Heart right ventricle (tissue), 16 donors: ENCODE measurements at regions of chr4 and their contacts with region 1.

Region 1: DNA sequence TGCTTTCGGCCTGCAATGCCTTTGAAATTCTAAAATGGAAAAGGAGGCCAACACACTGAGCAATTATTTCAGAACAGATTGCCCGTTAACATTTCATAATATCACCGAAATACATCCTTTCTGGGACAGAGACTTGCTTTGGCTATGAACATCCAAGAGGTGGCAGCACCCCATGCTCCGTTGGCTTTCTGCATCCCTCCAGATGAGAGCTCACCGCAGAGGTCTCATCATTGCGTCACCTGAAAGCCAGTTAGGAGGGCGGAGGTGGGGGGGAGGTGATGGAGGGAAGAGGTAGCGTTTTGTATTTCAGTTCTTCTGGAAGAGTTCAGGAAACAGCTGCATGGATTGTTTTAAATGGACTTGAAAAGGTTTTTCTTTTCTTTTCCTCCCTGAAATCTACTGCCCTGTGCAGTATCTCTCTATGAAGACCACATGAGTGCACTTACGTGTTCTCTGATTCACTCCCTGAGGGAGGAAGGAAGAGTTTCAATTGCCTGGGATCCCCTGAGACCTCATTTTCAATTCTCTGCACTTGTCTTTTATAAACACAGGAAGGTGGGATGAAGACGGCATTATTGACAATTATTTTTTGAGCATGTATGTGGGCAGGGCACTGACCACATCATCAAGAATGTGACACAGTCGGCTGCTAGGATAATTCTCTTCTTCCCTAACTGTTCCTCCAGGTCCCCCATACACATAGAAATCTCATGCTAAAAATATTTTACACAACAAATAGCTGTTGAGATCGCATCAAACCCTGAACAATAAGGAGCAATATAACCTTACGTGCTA is 166.9 kb upstream of the PGRMC2 start:
- DNase-seq: peak; percentile 66 to 80
- ATAC-seq: peak; percentile 85 to 94 (median 90)
- H3K4me3 ChIP-seq: no peak overlapping the region
- H3K27ac ChIP-seq: peak overlapping the region in 2 of 10 donors; percentile 17 to 22
- H3K4me1 ChIP-seq: peaks cover 0 to 30% (median 14%) of the 10 kb centered on the region in 9 donors
- H3K27me3 ChIP-seq: no peaks in the 10 kb centered on the region
- CTCF ChIP-seq: peak; percentile 47 to 89 (median 76)

Region 2: DNA sequence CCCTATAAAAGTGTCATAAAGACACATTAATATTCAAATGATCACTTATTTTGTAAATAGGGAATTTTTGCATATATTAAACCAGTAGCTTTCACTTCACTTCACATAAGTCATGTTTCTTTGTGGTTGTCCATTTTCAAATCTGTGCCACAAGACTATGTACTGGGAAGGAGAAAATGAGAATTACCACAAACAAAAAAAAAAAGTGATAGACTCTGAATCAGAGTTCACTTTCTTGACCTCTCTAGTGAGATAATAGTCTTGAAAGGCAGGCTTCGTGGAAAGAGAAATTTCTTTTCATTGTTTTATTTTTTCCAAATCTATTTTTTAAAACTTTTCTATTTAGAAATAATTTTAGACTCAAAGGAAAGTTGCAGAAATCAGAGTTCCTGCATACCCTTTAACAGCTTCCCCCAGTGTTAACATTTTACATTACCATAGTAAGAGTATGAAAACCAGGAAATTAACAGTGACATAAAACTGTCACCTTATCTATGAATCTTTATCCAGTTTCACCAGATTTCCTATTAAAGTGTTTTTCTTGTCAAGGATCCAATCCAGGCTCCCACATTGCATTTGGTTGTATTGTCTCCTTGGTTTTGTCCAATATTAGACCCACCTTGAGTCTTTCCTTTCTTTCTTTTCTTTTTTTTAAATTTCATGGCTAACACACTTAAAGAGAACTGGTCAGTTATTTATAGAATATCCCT is 48.5 kb after region 1 on chr4:
- intact Hi-C with region 1: no loop called
- DNase-seq: no peak
- ATAC-seq: peak in 4 of 8 donors; percentile 51 to 82 (median 71)
- H3K4me3 ChIP-seq: no peak overlapping the region
- H3K27ac ChIP-seq: no peak overlapping the region
- H3K4me1 ChIP-seq: peaks cover 0 to 3% (median 0%) of the 10 kb centered on the region in 9 donors
- H3K27me3 ChIP-seq: no peaks in the 10 kb centered on the region
- CTCF ChIP-seq: no peak

Region 3: DNA sequence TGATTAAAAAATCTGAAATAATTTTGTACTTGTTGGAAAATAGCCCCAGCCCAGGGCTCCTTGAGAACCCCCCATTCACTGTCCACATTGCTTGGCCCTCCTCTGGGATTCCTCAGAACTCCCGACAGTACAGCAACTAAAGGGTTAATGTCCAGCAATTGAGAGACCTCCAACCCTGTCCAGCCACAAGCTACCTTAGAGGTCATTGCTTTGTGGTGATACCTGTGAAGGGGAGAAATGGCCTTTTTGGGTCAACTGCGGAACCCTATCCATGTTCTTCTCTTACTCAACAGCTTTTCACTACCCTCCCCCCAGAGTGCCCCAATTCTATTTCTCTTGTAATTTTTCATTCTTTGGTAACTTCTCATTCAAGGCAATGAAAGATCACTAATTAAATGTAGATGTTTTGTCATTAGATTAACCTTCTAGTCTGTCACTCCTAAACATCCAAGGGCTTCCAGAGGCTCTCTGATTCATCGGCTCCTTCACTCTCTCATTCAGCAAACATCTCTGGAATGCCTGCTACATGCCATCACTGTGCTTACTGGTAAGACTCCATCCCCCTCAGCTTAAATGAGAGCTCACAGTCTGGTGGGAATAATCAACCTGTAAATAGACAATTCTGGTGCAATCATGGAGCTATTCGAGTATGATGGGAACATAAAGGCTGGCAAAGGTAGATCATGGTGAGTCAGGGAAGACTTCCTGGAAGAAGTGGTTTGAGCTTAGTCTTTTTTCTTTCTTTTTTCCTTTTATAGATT is 74.5 kb after region 1 on chr4:
- intact Hi-C with region 1: loop called in 2 of 10 experiments (anchors 5 kb)
- DNase-seq: peak in 1 of 2 donors; percentile 39
- ATAC-seq: peak; percentile 80 to 99 (median 90)
- H3K4me3 ChIP-seq: no peak overlapping the region
- H3K27ac ChIP-seq: peak overlapping the region in 9 of 10 donors; percentile 4 to 89 (median 62)
- H3K4me1 ChIP-seq: peaks cover 4 to 48% (median 26%) of the 10 kb centered on the region in 9 donors
- H3K27me3 ChIP-seq: no peaks in the 10 kb centered on the region
- CTCF ChIP-seq: no peak

Region 4: GRCh38 chr4:128558896-128559679 is 104.6 kb after region 1 on chr4:
- intact Hi-C with region 1: loop called in 4 of 10 experiments (anchors 5 kb)
- DNase-seq: no peak
- ATAC-seq: peak in 7 of 8 donors; percentile 20 to 72 (median 54)
- H3K4me3 ChIP-seq: no peak overlapping the region
- H3K27ac ChIP-seq: peak overlapping the region in 6 of 10 donors; percentile 5 to 80 (median 36)
- H3K4me1 ChIP-seq: peaks cover 0 to 23% (median 7%) of the 10 kb centered on the region in 9 donors
- H3K27me3 ChIP-seq: no peaks in the 10 kb centered on the region
- CTCF ChIP-seq: no peak

Region 5: DNA sequence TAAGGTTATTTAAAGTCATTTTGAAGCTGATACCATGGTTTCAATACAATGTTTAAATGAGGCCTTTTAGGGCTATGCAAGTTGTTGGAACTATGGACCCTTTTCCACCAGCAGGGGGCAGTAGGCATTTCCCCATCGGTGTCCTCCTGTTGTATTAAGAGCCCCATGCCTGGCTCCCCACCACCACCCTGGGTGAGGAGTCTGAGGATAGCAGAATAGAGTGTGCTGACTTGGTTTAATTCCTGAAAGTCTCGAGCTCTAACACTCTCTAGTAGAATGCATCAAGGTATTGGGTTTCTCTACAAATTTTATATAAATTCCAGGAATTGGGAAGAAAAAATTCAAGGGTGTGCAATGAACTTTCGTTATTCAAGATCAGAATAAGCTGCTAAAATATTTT is 120.2 kb after region 1 on chr4:
- intact Hi-C with region 1: loop called in 3 of 10 experiments (anchors 5 kb)
- DNase-seq: peak; percentile 22 to 60
- ATAC-seq: peak in 7 of 8 donors; percentile 30 to 66 (median 47)
- H3K4me3 ChIP-seq: no peak overlapping the region
- H3K27ac ChIP-seq: no peak overlapping the region
- H3K4me1 ChIP-seq: peaks cover 0 to 43% (median 28%) of the 10 kb centered on the region in 9 donors
- H3K27me3 ChIP-seq: no peaks in the 10 kb centered on the region
- CTCF ChIP-seq: peak; percentile 24 to 66 (median 52)

Region 6: GRCh38 chr4:128663336-128663735 is 208.9 kb after region 1 on chr4:
- intact Hi-C with region 1: loop called in 1 of 10 experiments (anchors 10 kb)
- DNase-seq: no peak
- ATAC-seq: no peak
- H3K4me3 ChIP-seq: no peak overlapping the region
- H3K27ac ChIP-seq: no peak overlapping the region
- H3K4me1 ChIP-seq: peaks cover 0 to 37% (median 7%) of the 10 kb centered on the region in 9 donors
- H3K27me3 ChIP-seq: no peaks in the 10 kb centered on the region
- CTCF ChIP-seq: no peak